Aorta (tissue), 5 donors: ENCODE measurements at regions of chr1 and their contacts with region 1.

Region 1: GRCh38 chr1:77683160-77684148 is 996 bp upstream of the ZZZ3 start:
- DNase-seq: peak; percentile 97
- ATAC-seq: peak; percentile 96
- H3K4me3 ChIP-seq: peak overlapping the region; percentile 51 to 96
- H3K27ac ChIP-seq: peak overlapping the region in 1 of 2 donors; percentile 71
- H3K4me1 ChIP-seq: peaks cover 2% of the 10 kb centered on the region in 2 donors
- H3K27me3 ChIP-seq: no peaks in the 10 kb centered on the region

Region 2: DNA sequence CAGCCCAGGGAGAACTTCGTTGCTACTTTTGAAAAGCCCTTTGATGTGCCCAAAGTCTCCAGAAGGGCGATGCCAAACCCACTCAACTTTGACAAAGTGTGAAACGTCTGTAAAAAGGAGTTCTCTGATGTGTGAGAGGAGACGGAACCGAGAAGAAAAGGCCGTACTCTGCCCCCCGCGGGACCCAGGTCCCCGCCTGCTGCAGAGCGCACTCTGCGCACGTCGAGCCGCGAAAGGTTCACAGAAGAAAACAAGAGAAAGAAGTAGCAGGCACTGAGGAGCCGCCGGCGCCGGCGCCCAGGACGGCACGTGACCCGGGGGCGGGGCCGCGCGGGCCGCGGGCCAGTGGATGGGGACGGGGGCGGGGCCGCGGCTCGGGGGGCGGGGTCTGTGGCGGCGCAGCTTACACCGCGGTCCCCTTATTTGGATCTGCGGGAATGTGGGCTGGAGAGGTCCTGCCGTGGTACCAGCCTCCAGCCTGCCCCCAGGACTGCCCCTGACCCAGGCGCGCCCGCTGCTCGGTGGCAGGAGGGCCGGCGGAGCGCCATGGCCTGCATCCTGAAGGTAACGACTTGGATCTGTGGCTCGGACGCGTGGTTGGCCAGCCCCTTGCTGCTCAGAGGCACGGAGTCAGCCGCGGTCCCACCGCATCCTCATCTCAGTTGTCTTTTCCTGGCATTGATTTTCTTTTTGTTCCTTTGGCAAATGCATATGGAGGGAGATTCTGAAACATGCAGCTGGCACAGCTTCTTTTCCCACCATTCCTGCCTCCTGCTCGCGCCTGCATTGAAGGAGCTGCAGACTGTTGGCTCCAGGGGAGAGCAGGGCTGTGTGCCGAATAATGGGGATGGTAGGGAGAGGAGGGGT is 1608.9 kb before region 1 on chr1 and contains the start of gene ST6GALNAC3:
- intact Hi-C with region 1: loop called in 1 of 2 experiments (anchors 10 kb)
- DNase-seq: peak; percentile 81 to 91
- ATAC-seq: peak; percentile 95
- H3K4me3 ChIP-seq: peak within 1 kb of the TSS; percentile 65 to 83
- H3K27ac ChIP-seq: no peak within 1 kb of the TSS
- H3K4me1 ChIP-seq: no peaks in the 10 kb centered on the region
- H3K27me3 ChIP-seq: no peaks in the 10 kb centered on the region
- total RNA-seq, gene ST6GALNAC3: 10.5 to 20.2 TPM

Region 3: GRCh38 chr1:77742011-77742555 is 58.6 kb after region 1 on chr1:
- intact Hi-C with region 1: no loop called
- DNase-seq: no peak
- ATAC-seq: no peak
- H3K4me3 ChIP-seq: no peak overlapping the region
- H3K27ac ChIP-seq: no peak overlapping the region
- H3K4me1 ChIP-seq: no peaks in the 10 kb centered on the region
- H3K27me3 ChIP-seq: no peaks in the 10 kb centered on the region

Region 4: DNA sequence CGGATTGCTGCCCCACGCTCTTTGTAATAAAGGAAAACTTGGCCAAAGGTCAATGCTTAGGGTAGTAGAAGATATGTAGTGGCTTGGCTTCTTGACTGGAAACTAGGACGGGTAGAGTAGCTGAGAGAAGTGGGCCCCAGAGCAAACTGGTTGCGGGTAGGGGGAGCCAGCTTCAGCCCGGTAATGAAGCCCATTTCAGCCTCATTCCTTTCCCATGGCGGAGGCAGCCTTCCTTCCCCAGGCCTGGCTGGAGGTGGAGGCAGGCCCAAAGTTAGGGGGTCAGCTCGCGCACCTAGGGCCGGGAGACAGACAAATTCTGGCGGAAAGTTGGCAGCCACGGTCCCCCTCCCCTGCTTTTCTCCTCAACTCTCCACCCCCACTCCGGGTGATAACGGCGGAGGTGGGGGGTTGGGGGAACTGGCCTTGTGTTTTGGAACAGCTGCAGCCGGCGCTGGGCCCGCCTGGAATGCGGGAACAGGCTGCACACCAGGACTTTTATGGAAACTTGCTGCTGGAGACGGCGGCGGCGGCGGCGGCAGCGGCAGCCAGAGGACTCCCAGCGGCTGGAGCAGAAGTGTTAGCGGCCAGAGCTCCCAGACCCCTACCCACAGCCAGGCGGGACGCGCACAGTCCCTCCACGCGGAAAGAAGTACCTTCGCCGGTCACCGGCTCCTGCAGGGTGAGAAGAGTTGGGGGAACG is 204.8 kb after region 1 on chr1 and contains the start of gene NEXN:
- intact Hi-C with region 1: loop called in 1 of 2 experiments (anchors 10 kb)
- DNase-seq: peak; percentile 87 to 94
- ATAC-seq: peak; percentile 90
- H3K4me3 ChIP-seq: peak within 1 kb of the TSS; percentile 93 to 97
- H3K27ac ChIP-seq: peak within 1 kb of the TSS; percentile 96 to 100
- H3K4me1 ChIP-seq: no peaks in the 10 kb centered on the region
- H3K27me3 ChIP-seq: no peaks in the 10 kb centered on the region
- total RNA-seq, gene NEXN: 81.9 to 237 TPM